Activated T-helper 1 cell treated with anti-CD3 and anti-CD28 coated beads, Interleukin-12 subunit alpha, Interleukin-12 subunit beta, Interleukin-2, Interleukin-4 antibody, amounts not matched to agents 30 ng/mL and 10 ng/mL and 1 ng/mL, durations not matched to agents 14 hours and 24 hours and 36 hours (primary cell): ENCODE measurements at regions of chr1 and their contacts with region 1.

Region 1: GRCh38 chr1:115275212-115275611 is 62.8 kb downstream of the NGF start:
- DNase-seq: no peak
- H3K4me3 Mint-ChIP-seq: no peak overlapping the region
- H3K27ac Mint-ChIP-seq: no peak overlapping the region
- H3K4me1 Mint-ChIP-seq: no peaks in the 10 kb centered on the region
- H3K27me3 Mint-ChIP-seq: peaks cover 4% of the 10 kb centered on the region

Region 2: GRCh38 chr1:115524236-115524635 is 249.0 kb after region 1 on chr1:
- intact Hi-C with region 1: no loop called
- DNase-seq: no peak
- H3K4me3 Mint-ChIP-seq: no peak overlapping the region
- H3K27ac Mint-ChIP-seq: no peak overlapping the region
- H3K4me1 Mint-ChIP-seq: no peaks in the 10 kb centered on the region
- H3K27me3 Mint-ChIP-seq: peaks cover 1% of the 10 kb centered on the region

Region 3: DNA sequence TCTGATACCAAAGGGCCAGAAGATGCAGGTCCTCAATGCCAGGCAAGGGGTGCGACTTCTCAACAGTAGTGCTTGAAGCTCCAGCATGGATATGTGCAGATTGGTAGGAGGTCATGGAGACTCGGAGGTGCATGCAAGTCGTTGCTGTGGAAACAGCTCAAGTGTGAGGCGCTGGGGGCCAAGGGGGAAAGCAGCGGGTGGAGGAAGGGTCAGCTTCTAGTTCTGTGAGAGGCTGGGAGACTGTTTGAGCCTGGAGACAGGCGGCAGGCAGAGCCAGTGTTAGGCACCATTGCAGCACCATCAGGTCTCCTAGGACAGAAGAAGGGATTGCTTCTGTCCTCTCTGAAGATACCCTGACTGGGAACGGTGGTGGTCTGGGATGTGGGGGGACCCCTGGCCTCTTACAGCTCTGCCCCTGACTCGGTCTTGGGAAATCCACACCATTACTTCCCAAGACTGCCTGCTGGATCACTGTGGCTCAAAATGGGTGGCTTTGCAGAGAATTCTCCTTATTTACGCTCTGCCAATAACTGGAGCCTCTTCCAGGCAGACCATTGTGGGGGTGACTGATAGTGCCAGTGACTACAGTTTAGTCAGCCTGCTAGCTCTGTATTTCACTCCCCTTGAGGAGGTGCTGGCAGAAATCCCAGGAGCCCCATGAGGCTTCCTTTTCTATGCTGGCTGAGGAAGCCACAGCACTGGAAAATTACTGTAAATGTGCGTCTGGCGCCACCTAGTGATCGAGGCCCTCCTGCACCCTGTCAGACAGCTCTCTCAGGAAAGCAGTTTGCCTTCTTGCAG is 320.3 kb after region 1 on chr1:
- intact Hi-C with region 1: loop called (anchors 10 kb)
- DNase-seq: peak; percentile 34
- H3K4me3 Mint-ChIP-seq: no peak overlapping the region
- H3K27ac Mint-ChIP-seq: no peak overlapping the region
- H3K4me1 Mint-ChIP-seq: no peaks in the 10 kb centered on the region
- H3K27me3 Mint-ChIP-seq: peaks cover 8% of the 10 kb centered on the region